Activated CD8-positive, alpha-beta memory T cell treated with anti-CD3 and anti-CD28 coated beads, Interleukin-2, amount 10 ng/mL, durations not matched to agents 7 days and 5 days (primary cell): ENCODE measurements at regions of chr2 and their contacts with region 1.

Region 1: GRCh38 chr2:197191177-197191939 is 119.2 kb downstream of the ANKRD44 start:
- DNase-seq: no peak
- ATAC-seq: peak; percentile 35
- H3K4me3 Mint-ChIP-seq: peak overlapping the region; percentile 44
- H3K27ac Mint-ChIP-seq: peak overlapping the region; percentile 78
- H3K4me1 Mint-ChIP-seq: peaks cover 73% of the 10 kb centered on the region
- H3K27me3 Mint-ChIP-seq: no peaks in the 10 kb centered on the region

Region 2: GRCh38 chr2:197152451-197153228 is 38.7 kb before region 1 on chr2:
- CTCF ChIA-PET with region 1: no interaction called
- DNase-seq: no peak
- ATAC-seq: peak; percentile 39
- H3K4me3 Mint-ChIP-seq: no peak overlapping the region
- H3K27ac Mint-ChIP-seq: peak overlapping the region; percentile 22
- H3K4me1 Mint-ChIP-seq: peaks cover 71% of the 10 kb centered on the region
- H3K27me3 Mint-ChIP-seq: no peaks in the 10 kb centered on the region

Region 3: DNA sequence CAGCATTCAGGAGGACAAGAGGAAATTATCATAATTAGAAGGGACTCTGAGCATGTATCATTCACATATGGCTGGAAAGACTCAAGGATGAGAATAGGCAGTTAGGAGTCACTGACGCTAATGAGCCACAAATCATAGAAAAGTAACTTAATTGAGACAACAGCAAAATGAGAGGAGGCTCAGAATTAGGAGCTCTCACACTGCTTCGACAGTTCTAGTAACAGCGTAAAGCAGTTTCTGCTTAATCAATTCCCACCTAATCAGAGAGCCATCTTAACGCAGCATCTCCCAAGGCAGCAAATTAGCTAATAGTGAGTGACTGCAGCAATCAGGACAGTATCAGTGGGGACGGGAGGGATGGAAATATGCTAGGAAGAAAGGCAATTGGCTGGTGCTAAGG is 86.4 kb after region 1 on chr2:
- CTCF ChIA-PET with region 1: interaction called, 10 read pairs
- DNase-seq: no peak
- ATAC-seq: no peak
- H3K4me3 Mint-ChIP-seq: no peak overlapping the region
- H3K27ac Mint-ChIP-seq: peak overlapping the region; percentile 4
- H3K4me1 Mint-ChIP-seq: peaks cover 70% of the 10 kb centered on the region
- H3K27me3 Mint-ChIP-seq: no peaks in the 10 kb centered on the region